ENCODE measurements at regions of chr12 and their contacts with region 1.

Region 1: DNA sequence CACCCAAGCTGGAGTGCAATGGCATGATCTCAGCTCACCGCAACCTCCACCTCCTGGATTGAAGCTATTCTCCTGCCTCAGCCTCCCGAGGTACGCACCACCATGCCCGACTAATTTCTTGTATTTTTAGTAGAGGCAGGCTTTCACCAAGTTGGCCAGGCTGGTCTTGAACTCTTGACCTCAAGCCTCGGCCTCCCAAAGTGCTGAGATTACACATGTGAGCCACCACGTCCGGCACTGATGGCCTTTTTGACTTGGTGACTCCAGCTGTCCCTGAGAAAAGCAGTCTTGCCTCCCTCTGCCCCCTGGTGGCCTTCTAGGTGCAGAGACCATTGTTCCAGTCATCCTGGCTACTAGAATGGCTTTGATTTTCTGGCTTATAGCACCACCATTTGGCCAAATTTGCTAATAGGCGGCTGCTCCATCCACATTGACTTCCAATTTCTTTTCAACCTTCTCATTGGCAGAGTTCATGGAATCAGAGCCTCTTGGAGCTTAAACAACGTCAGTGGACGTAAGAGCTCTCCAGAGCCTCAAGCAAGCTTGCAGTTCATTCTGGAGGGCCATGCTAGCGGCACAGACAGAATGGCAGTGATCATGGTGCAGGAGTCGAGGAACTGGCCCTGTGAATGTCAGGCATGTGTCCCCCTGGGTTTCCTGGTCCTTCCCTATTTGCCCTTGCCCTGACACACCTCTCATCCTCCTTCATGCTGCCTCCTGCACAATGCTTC is 25.4 kb upstream of the EIF4B start:
- DNase-seq: peak; percentile 84
- H3K4me3 ChIP-seq: no peak overlapping the region
- CTCF ChIP-seq: peak; percentile 97

Region 2: GRCh38 chr12:52372216-52373154 is 608.4 kb before region 1 on chr12:
- in situ Hi-C with region 1: loop called (anchors 25 kb)
- DNase-seq: peak; percentile 85
- H3K4me3 ChIP-seq: no peak overlapping the region
- CTCF ChIP-seq: peak; percentile 89

Region 3: GRCh38 chr12:52892172-52892852 is 88.5 kb before region 1 on chr12:
- in situ Hi-C with region 1: loop called (anchors 5 kb)
- DNase-seq: no peak
- H3K4me3 ChIP-seq: no peak overlapping the region
- CTCF ChIP-seq: no peak

Measured in astrocyte of the cerebellum (primary cell).